ENCODE measurements at regions of chr6 and their contacts with region 1.

Region 1: DNA sequence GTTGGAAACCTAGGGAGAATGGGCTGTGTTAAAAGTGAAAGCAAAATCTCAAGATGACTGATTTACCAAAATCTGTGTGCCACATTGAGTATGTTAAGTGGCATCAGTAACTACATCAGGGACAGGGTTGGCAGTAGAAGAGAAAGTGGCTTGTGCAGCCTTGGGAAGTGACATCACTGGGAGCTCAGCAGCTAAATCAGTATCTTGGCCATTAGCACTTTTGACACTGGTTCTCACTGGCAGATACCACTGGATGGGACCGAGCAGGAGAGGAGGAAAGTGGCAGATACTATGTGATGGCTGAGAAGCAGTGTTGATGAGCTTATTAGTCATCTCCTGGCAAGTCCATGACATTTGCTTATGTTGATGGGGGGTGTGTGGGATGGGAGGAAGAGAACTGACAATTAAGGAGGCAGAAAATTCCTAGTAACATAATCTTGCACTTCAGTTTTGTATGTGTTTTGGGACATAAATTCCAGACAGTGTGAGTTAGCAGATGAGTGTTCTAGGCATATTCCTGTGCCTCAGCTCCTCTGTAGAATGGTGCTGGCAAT is 322.2 kb downstream of the SOX4 start:
- DNase-seq: no peak
- H3K4me3 ChIP-seq: peak overlapping the region; percentile 40
- H3K27ac ChIP-seq: peak overlapping the region; percentile 12
- H3K27me3 ChIP-seq: no peaks in the 10 kb centered on the region
- CTCF ChIP-seq: no peak

Region 2: DNA sequence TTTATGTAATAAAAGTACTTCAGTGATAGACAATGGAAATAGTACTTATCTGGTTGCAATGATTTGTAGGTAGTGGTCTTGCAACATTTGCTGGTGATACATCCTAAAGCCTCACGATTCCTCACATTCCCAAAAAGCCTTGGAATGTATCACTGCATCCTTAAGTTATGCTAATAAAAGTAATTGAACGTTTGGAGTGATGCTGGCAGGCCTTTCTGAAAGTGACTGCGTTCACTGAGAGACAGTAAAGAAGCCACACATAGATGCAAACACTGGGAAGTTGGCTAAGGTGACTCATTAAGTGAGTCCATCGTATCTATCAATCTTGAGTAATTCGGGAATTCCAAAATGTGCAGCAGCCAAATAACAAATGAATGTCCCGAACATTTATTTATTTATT is 766.3 kb before region 1 on chr6:
- CTCF ChIA-PET with region 1: no interaction called
- POLR2A ChIA-PET with region 1: no interaction called
- DNase-seq: no peak
- H3K4me3 ChIP-seq: no peak overlapping the region
- H3K27ac ChIP-seq: no peak overlapping the region
- H3K27me3 ChIP-seq: no peaks in the 10 kb centered on the region
- CTCF ChIP-seq: no peak

Region 3: DNA sequence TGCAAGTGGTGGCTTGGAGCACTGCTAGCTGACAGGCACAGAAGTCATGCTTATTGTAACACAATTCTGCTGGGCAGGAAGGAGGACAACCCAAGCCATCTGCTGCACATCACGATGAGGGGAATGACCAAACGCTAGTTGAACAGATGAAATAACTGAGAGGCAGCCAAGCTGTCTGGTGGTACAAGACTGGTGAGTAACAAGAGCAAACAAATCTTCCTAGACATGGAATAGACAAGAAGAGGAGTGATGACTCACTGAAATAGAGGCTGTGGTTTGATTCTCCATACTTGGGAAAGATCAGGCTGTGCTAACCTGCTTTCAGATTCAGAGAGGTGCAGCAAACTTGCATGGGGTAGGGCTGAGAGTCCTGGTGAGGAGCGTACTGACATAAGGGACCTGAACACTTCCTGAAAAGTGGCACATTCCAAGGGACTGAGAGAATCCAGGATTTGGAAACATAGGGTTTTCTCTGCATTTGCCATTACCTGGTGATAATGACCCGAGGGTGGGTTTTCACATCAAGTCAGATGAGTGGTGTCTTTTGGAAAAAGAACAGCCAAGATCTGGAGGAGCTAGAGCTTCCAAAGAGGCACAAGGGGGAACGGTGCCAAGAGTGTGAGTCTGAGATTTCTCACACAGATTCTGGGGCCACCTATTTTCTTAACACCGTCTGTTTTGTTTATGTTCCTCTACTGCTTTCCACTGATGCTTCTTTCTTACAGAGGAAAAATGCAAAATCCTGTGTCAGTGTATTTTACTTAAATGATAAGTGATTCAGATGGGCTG is 321.0 kb after region 1 on chr6:
- CTCF ChIA-PET with region 1: no interaction called
- POLR2A ChIA-PET with region 1: interaction called, 14 read pairs
- DNase-seq: peak; percentile 76
- H3K4me3 ChIP-seq: no peak overlapping the region
- H3K27ac ChIP-seq: no peak overlapping the region
- H3K27me3 ChIP-seq: no peaks in the 10 kb centered on the region
- CTCF ChIP-seq: no peak

Measured in AG04450 (cell line).